SK-N-SH (cell line): ENCODE measurements at regions of chrX and their contacts with region 1.

Region 1: DNA sequence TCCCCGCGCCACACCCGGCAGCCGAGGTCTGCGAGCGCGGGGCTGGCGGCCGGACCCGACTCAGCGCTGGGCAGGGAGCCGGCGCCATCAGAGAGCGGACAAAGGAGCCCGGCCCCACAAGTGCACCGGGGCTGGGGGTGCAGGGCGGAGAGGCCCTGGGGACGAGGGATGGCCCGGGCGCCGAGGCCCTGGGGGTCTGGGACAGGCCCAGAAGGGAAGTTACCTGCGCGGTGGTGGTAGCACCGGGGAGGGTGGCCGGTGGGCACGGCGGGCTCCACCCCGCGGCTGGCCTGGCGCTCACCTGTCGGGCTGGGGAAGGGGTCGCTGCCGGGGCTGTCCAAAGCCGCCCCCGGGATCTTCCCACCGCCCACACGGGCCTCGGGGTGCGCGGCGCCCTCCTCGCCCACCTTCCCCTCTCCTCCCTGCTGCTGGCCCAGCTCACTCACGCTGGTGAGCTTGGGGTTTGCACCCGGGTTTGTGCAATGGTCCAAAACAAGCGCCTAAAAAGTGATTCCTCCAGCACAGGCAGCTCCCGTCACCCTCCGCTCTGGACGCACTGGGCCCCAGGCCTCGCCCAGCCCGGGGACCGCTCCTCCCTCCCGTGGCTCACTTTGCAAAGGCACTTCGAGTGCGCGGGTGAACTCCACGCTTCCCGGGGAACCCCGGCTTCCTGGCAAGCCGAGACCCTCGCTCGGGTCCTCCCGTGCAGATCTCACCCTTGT is at the start of gene CTPS2:
- DNase-seq: peak; percentile 82
- H3K4me3 ChIP-seq: peak within 1 kb of the TSS; percentile 62 to 66
- H3K27ac ChIP-seq: peak within 1 kb of the TSS; percentile 31 to 72
- H3K4me1 ChIP-seq: no peaks in the 10 kb centered on the region; a peak in 1 of 4 replicates
- H3K27me3 ChIP-seq: no peaks in the 10 kb centered on the region
- CTCF ChIP-seq: no peak
- EP300 ChIP-seq: no peak
- RAD21 ChIP-seq: no peak
- polyA plus RNA-seq, gene CTPS2: 6.1 and 6.9 TPM in 2 replicates

Region 2: DNA sequence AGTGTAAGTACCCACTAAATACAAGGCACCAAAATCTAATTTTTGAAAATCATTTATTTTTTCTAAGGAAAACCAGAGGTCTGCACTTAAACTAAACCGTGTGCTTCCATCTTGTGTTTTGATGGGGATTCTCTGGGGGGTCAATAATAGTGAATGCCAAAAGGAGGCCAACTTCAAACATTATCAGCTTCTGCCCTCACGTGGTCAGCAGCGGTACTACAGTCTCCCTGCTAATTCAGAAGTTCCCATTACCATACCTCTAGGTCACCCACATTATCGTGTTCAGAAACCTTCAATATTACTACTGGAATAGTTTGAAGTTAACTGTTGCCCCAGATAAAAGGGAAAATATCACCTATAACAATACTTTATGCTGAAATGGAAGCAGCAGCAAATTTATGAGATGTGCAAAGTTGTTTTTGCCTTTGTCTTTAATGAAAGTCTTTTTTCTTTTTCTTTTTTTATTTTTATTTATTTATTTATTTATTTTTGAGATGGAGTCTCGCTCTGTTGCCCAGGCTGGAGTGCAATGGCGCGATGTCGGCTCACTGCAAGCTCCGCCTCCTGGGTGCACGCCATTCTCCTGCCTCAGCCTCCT is 17.1 kb before region 1 on chrX:
- CTCF ChIA-PET with region 1: interaction called, 18 read pairs
- POLR2A ChIA-PET with region 1: no interaction called
- DNase-seq: peak; percentile 69
- H3K4me3 ChIP-seq: no peak overlapping the region
- H3K27ac ChIP-seq: no peak overlapping the region
- H3K4me1 ChIP-seq: no peaks in the 10 kb centered on the region
- H3K27me3 ChIP-seq: no peaks in the 10 kb centered on the region
- CTCF ChIP-seq: peak; percentile 97
- EP300 ChIP-seq: no peak
- RAD21 ChIP-seq: peak; percentile 81